ENCODE measurements at regions of chr10 and their contacts with region 1.

Region 1: GRCh38 chr10:128150045-128150493 is 23.8 kb upstream of the MKI67 start:
- DNase-seq: no peak
- ATAC-seq: peak in 1 of 2 donors; percentile 44
- H3K4me3 ChIP-seq: peak overlapping the region; percentile 24 to 47 (median 36)
- H3K27ac ChIP-seq: no peak overlapping the region
- H3K4me1 ChIP-seq: no peaks in the 10 kb centered on the region
- H3K27me3 ChIP-seq: peaks cover 0 to 17% (median 6%) of the 10 kb centered on the region in 3 donors
- CTCF ChIP-seq: peak; percentile 32 to 67 (median 41)
- POLR2A ChIP-seq: no peak

Region 2: DNA sequence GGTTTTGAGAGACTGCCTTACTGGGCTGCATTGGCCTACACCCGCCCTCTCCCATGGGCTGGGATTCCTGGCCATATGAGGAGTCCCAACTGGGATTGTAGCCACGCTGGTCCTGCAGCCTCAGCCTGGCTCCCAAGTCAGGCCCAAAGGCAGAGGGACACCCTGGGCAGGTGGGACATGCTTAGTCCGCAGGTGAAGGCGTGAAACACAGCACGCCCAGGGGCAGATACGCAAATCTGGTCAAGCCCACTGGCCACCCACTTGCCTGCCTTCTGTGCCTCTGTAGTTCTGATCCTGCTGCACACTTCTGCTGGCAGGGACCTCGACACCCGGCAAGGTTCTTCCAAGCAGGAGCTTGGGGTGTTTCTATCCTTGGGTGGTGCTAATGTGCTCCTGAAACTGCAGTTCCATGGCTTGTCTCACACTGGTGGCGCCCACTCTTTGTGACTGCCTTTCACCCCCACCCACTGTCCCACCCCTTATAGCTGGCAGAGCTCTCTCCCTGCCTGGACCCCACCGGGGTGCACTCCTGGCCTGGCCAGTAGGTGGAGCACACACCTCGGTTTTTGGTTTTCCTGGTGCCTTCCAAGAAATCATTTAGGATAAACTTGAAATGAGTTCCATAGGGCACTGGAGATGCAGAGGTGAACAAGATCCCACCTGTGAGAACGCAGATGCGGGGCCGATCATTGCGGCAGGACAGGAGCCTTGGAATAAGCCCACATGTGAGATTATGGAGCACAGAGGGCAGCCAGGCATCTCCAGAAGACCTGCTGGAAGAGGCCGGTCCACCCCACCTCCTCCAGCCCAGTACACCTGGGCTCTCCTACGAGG is 71.7 kb before region 1 on chr10:
- in situ Hi-C with region 1: no loop called
- intact Hi-C with region 1: loop called (anchors 2 kb)
- DNase-seq: no peak
- ATAC-seq: no peak
- H3K4me3 ChIP-seq: no peak overlapping the region
- H3K27ac ChIP-seq: no peak overlapping the region
- H3K4me1 ChIP-seq: no peaks in the 10 kb centered on the region
- H3K27me3 ChIP-seq: no peaks in the 10 kb centered on the region
- CTCF ChIP-seq: peak in 2 of 5 experiments; percentile 32 to 43
- POLR2A ChIP-seq: no peak